Right ventricle myocardium inferior (tissue), 1 donor: ENCODE measurements at regions of chr12 and their contacts with region 1.

Region 1: GRCh38 chr12:2336409-2336829 is 283.6 kb downstream of the CACNA1C start:
- DNase-seq: no peak
- ATAC-seq: peak; percentile 81

Region 2: DNA sequence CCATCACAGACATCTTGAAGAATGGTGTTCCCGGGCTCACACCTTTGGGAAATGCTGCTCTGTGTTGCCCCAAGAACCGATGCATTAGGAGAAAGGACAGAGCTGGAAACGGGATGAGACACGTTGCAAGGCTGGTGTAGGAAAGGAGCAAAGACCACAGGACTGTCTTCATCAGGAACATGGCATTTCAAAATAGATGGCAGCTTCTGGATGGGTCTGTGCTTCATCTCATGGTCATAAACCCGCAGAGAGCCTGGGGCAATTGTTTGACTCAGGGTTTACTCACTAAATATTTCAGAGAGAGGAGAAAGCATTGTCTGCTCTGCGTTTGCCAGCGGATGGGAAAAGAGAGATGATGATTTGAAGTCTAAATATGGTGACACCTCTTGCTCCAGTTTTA is 207.3 kb before region 1 on chr12:
- intact Hi-C with region 1: no loop called
- DNase-seq: no peak
- ATAC-seq: no peak

Region 3: GRCh38 chr12:2387103-2387834 is 50.9 kb after region 1 on chr12:
- intact Hi-C with region 1: loop called (anchors 5 kb)
- DNase-seq: no peak
- ATAC-seq: no peak